Esophagus muscularis mucosa (tissue), 4 donors: ENCODE measurements at regions of chr1 and their contacts with region 1.

Region 1: GRCh38 chr1:207868774-207869721 is 41.9 kb downstream of the CD34 start:
- DNase-seq: peak; percentile 96
- H3K4me3 ChIP-seq: peak overlapping the region; percentile 87 to 99 (median 92)
- H3K27ac ChIP-seq: peak overlapping the region; percentile 96 to 98 (median 98)
- H3K4me1 ChIP-seq: peaks cover 59 to 88% (median 85%) of the 10 kb centered on the region in 4 donors
- H3K27me3 ChIP-seq: no peaks in the 10 kb centered on the region
- CTCF ChIP-seq: peak; percentile 81 to 97 (median 91)
- EP300 ChIP-seq: no peak
- POLR2A ChIP-seq: peak; percentile 48

Region 2: GRCh38 chr1:207751790-207752455 is 117.1 kb before region 1 on chr1 and contains the start of gene CD46:
- intact Hi-C with region 1: loop called (anchors 5 kb)
- DNase-seq: peak; percentile 99
- H3K4me3 ChIP-seq: peak within 1 kb of the TSS; percentile 75 to 93 (median 88)
- H3K27ac ChIP-seq: peak within 1 kb of the TSS; percentile 88 to 91 (median 89)
- H3K4me1 ChIP-seq: peaks cover 42 to 51% (median 47%) of the 10 kb centered on the region in 4 donors
- H3K27me3 ChIP-seq: no peaks in the 10 kb centered on the region
- CTCF ChIP-seq: peak in 1 of 3 experiments; percentile 10
- EP300 ChIP-seq: peak; percentile 71
- POLR2A ChIP-seq: peak; percentile 44
- total RNA-seq, gene CD46: 65.6 to 86.4 (median 69.2) TPM

Region 3: GRCh38 chr1:207811920-207812720 is 56.9 kb before region 1 on chr1:
- intact Hi-C with region 1: loop called (anchors 10 kb)
- DNase-seq: no peak
- H3K4me3 ChIP-seq: peak overlapping the region; percentile 16 to 89 (median 34)
- H3K27ac ChIP-seq: peak overlapping the region; percentile 97 to 99 (median 98)
- H3K4me1 ChIP-seq: peaks cover 99 to 100% (median 100%) of the 10 kb centered on the region in 4 donors
- H3K27me3 ChIP-seq: no peaks in the 10 kb centered on the region
- CTCF ChIP-seq: peak; percentile 66 to 77 (median 69)
- EP300 ChIP-seq: no peak
- POLR2A ChIP-seq: no peak

Region 4: DNA sequence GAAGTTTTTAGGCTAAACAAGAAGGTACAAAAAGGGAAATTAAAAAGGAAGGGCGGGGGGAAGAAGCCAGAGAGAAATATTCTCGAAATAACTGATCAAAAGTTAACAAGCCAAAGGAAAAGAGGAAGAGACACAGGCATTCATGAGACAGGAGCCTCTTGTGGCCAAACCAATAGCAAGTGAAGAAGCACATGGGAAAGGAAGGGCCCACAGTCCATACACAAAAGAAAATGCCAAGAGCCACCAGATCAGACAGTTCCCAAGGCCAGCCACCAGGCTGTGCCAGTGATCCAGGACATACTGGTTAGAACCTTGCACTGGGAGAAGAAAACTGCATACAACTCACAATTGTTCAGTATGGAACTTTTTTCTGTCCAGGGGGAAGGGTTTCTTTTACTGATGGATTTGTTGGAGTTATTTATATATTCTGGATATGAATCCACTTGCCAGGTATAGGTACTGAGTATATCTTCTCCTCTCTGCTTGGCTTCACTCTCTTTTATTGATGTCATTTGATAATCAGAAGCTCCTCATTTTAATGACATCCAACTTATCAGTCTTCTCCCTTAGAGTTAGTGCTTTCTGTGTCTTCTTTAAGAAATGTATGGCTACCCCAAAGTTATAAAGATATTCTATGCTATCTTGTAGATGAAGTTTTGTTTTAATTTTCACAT is 40.4 kb before region 1 on chr1:
- intact Hi-C with region 1: loop called (anchors 1 kb)
- DNase-seq: no peak
- H3K4me3 ChIP-seq: no peak overlapping the region
- H3K27ac ChIP-seq: peak overlapping the region; percentile 97 to 99 (median 98)
- H3K4me1 ChIP-seq: peaks cover 91 to 96% (median 95%) of the 10 kb centered on the region in 4 donors
- H3K27me3 ChIP-seq: peaks cover 0 to 3% (median 0%) of the 10 kb centered on the region in 4 donors
- CTCF ChIP-seq: peak; percentile 88 to 94 (median 88)
- EP300 ChIP-seq: no peak
- POLR2A ChIP-seq: no peak

Region 5: GRCh38 chr1:208077232-208078075 is 208.4 kb after region 1 on chr1:
- intact Hi-C with region 1: no loop called
- DNase-seq: no peak
- H3K4me3 ChIP-seq: no peak overlapping the region
- H3K27ac ChIP-seq: no peak overlapping the region
- H3K4me1 ChIP-seq: no peaks in the 10 kb centered on the region
- H3K27me3 ChIP-seq: no peaks in the 10 kb centered on the region
- CTCF ChIP-seq: no peak
- EP300 ChIP-seq: no peak
- POLR2A ChIP-seq: no peak